ENCODE measurements at regions of chr9 and their contacts with region 1.

Region 1: DNA sequence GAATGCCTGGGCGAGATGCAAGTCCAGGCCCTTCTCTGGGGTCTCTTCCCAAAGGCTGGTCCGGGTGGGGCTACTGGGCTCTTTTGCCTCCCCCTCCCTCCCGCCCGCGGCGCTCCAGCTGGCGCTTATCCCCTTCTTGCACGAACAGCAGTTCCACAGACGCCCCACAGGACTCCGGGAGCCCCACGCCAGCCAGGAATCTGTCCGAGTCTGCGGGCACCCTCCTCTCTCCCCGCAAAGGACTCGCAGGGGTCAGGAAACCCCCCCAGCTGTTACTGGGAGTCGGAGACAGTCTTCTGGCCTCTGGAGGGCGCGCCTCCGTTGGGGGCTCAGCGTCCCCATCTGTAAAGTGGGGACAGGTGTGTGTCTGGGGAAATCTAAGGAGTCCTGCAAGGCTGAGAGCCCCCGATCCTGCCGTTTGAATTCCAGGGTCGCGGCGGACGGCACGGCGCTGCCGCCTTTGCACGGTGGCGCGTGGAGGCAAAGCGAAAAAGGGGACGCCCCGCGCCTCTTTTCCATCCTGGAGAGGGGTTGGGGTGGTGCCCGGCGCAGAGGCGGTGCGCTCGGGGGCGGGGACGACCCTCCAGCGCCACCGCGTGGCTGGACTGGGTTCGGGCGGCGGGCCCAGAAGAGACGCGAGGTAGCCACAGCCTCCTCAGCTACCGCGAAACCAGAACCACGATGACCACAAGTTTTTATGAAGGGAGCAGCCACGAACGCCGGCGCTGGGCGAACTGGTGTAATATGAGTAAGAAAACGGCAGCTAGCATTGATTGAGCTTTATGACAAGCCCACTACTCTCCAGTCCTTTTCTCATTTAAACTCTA is 2.9 kb upstream of the CCIN start:
- DNase-seq: peak; percentile 76 to 86 (median 79)
- H3K4me3 ChIP-seq: peak overlapping the region in 1 of 2 donors; percentile 57
- H3K4me3 Mint-ChIP-seq: peak overlapping the region; percentile 67 to 84 (median 78)
- H3K27ac ChIP-seq: no peak overlapping the region
- H3K27ac Mint-ChIP-seq: peak overlapping the region; percentile 35 to 78 (median 60)
- H3K4me1 ChIP-seq: peaks cover 12% of the 10 kb centered on the region
- H3K4me1 Mint-ChIP-seq: peaks cover 10 to 28% (median 14%) of the 10 kb centered on the region in 4 donors
- H3K27me3 ChIP-seq: no peaks in the 10 kb centered on the region
- H3K27me3 Mint-ChIP-seq: no peaks in the 10 kb centered on the region

Region 2: GRCh38 chr9:36023260-36024048 is 142.9 kb before region 1 on chr9:
- CTCF ChIA-PET with region 1: interaction called, 5 read pairs
- POLR2A ChIA-PET with region 1: no interaction called
- intact Hi-C with region 1: loop called (anchors 5 kb)
- DNase-seq: peak; percentile 62 to 66 (median 64)
- H3K4me3 ChIP-seq: no peak overlapping the region
- H3K4me3 Mint-ChIP-seq: no peak overlapping the region
- H3K27ac ChIP-seq: no peak overlapping the region
- H3K27ac Mint-ChIP-seq: no peak overlapping the region
- H3K4me1 ChIP-seq: no peaks in the 10 kb centered on the region
- H3K4me1 Mint-ChIP-seq: peaks cover 0 to 2% (median under 1%) of the 10 kb centered on the region in 4 donors
- H3K27me3 ChIP-seq: peaks cover 4% of the 10 kb centered on the region
- H3K27me3 Mint-ChIP-seq: peaks cover 0 to 12% of the 10 kb centered on the region in 2 donors

Region 3: GRCh38 chr9:36110434-36110833 is 55.9 kb before region 1 on chr9:
- CTCF ChIA-PET with region 1: interaction called, 648 read pairs
- POLR2A ChIA-PET with region 1: interaction called, 14 read pairs
- intact Hi-C with region 1: no loop called
- DNase-seq: no peak
- H3K4me3 ChIP-seq: no peak overlapping the region
- H3K4me3 Mint-ChIP-seq: no peak overlapping the region
- H3K27ac ChIP-seq: no peak overlapping the region
- H3K27ac Mint-ChIP-seq: no peak overlapping the region
- H3K4me1 ChIP-seq: no peaks in the 10 kb centered on the region
- H3K4me1 Mint-ChIP-seq: peaks cover 0 to 2% (median 0%) of the 10 kb centered on the region in 4 donors
- H3K27me3 ChIP-seq: no peaks in the 10 kb centered on the region
- H3K27me3 Mint-ChIP-seq: no peaks in the 10 kb centered on the region

Region 4: GRCh38 chr9:36136272-36136893 is 29.9 kb before region 1 on chr9 and contains the start of gene GLIPR2:
- CTCF ChIA-PET with region 1: interaction called, 100 read pairs
- POLR2A ChIA-PET with region 1: interaction called, 36 read pairs
- intact Hi-C with region 1: loop called (anchors 1 kb)
- DNase-seq: peak; percentile 75 to 82 (median 79)
- H3K4me3 ChIP-seq: peak within 1 kb of the TSS; percentile 66 to 81
- H3K4me3 Mint-ChIP-seq: peak within 1 kb of the TSS; percentile 92 to 97 (median 95)
- H3K27ac ChIP-seq: peak within 1 kb of the TSS; percentile 77
- H3K27ac Mint-ChIP-seq: peak within 1 kb of the TSS; percentile 89 to 97 (median 95)
- H3K4me1 ChIP-seq: peaks cover 54% of the 10 kb centered on the region
- H3K4me1 Mint-ChIP-seq: peaks cover 35 to 56% (median 48%) of the 10 kb centered on the region in 4 donors
- H3K27me3 ChIP-seq: no peaks in the 10 kb centered on the region
- H3K27me3 Mint-ChIP-seq: no peaks in the 10 kb centered on the region
- total RNA-seq, gene GLIPR2: 17.0 to 18.9 TPM

Region 5: GRCh38 chr9:36190388-36191287 is 24.3 kb after region 1 on chr9 and contains the start of gene CLTA:
- CTCF ChIA-PET with region 1: interaction called, 35 read pairs
- POLR2A ChIA-PET with region 1: interaction called, 3 read pairs
- intact Hi-C with region 1: no loop called
- DNase-seq: peak; percentile 93 to 98 (median 95)
- H3K4me3 ChIP-seq: peak within 1 kb of the TSS; percentile 87 to 94
- H3K4me3 Mint-ChIP-seq: peak within 1 kb of the TSS; percentile 90 to 98 (median 94)
- H3K27ac ChIP-seq: peak within 1 kb of the TSS; percentile 91
- H3K27ac Mint-ChIP-seq: peak within 1 kb of the TSS; percentile 92 to 96 (median 96)
- H3K4me1 ChIP-seq: peaks cover 42% of the 10 kb centered on the region
- H3K4me1 Mint-ChIP-seq: peaks cover 36 to 57% (median 44%) of the 10 kb centered on the region in 4 donors
- H3K27me3 ChIP-seq: no peaks in the 10 kb centered on the region
- H3K27me3 Mint-ChIP-seq: peaks cover 0 to 1% of the 10 kb centered on the region in 2 donors
- total RNA-seq, gene CLTA: 69.9 to 72.3 TPM

Measured in CD4-positive, alpha-beta memory T cell (primary cell).